Endothelial cell of umbilical vein (primary cell): ENCODE measurements at regions of chr2 and their contacts with region 1.

Region 1: DNA sequence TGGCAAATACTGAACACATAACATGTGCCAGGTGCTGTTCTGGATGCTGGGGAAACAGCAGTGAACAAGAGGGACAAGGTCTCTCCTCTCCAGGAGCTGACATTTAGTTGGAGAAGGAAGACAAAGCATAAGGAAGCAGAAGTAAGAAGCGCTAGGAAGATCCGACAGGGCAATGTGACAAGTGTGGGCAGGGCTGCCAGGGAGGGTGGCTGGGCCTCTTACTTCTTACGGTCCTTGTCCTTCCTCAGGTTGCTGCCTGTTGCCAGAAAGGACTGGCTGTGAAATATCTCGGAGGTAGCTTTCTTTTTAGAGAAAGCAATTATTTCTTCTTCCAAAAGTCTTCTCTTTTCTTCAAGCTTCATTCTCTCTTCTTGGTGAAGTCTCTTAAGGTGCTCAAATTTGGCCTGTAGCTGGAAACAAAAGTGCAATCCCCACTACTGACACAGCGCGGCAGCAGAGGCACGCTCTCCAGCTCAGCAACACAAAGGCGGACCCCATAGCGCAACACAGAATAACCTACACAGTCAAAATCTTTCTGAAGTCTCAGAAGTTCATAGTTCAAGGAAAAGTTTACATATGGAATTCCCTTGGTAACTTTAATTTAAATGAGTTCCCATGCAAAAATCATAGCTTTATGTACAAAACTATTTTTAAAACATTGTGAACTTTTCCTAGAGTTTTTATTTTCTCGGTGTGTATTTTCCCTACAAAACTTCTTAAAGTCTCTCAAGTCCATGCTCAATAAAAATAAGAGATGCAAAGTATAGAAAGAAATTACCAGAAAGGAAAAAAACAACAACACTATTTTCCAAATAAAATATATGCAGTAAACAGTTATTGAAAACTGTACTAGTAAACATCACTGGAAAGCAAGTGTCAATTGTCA is 67.7 kb downstream of the SEPTIN10 start:
- DNase-seq: peak; percentile 80
- H3K4me3 ChIP-seq: no peak overlapping the region
- H3K27ac ChIP-seq: no peak overlapping the region
- H3K4me1 ChIP-seq: peaks cover 3% of the 10 kb centered on the region
- H3K27me3 ChIP-seq: no peaks in the 10 kb centered on the region
- CTCF ChIP-seq: peak; percentile 86 to 88
- POLR2A ChIP-seq: no peak

Region 2: DNA sequence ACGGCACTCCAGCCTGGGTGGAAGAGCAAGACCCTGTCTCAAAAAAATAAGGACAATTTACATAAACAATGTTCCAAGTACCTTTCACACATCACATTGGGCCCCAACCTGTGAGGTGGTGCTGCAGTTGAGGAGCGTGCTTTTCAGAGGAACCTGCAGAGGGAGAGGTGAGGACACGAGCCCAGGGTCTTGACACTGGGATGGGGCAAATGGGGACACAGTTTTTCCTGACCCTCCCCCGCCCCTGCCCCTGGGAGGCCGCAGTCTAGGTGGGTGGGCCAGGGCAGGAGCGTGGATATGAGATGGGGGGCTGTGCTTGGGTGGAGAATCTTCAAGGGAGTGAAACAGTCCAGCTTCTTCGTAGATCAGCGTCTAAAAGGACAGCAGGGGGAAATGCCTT is 45.2 kb before region 1 on chr2:
- CTCF ChIA-PET with region 1: no interaction called
- POLR2A ChIA-PET with region 1: no interaction called
- dilution Hi-C with region 1: no loop called
- intact Hi-C with region 1: no loop called
- DNase-seq: no peak
- H3K4me3 ChIP-seq: no peak overlapping the region
- H3K27ac ChIP-seq: no peak overlapping the region
- H3K4me1 ChIP-seq: peaks cover 19% of the 10 kb centered on the region
- H3K27me3 ChIP-seq: no peaks in the 10 kb centered on the region
- CTCF ChIP-seq: no peak
- POLR2A ChIP-seq: no peak

Region 3: GRCh38 chr2:109516445-109517117 is 29.5 kb before region 1 on chr2:
- CTCF ChIA-PET with region 1: interaction called, 5 read pairs
- POLR2A ChIA-PET with region 1: no interaction called
- dilution Hi-C with region 1: no loop called
- intact Hi-C with region 1: loop called (anchors 1 kb)
- DNase-seq: peak; percentile 60
- H3K4me3 ChIP-seq: no peak overlapping the region
- H3K27ac ChIP-seq: no peak overlapping the region
- H3K4me1 ChIP-seq: no peaks in the 10 kb centered on the region
- H3K27me3 ChIP-seq: no peaks in the 10 kb centered on the region
- CTCF ChIP-seq: peak; percentile 84 to 95
- POLR2A ChIP-seq: no peak

Region 4: DNA sequence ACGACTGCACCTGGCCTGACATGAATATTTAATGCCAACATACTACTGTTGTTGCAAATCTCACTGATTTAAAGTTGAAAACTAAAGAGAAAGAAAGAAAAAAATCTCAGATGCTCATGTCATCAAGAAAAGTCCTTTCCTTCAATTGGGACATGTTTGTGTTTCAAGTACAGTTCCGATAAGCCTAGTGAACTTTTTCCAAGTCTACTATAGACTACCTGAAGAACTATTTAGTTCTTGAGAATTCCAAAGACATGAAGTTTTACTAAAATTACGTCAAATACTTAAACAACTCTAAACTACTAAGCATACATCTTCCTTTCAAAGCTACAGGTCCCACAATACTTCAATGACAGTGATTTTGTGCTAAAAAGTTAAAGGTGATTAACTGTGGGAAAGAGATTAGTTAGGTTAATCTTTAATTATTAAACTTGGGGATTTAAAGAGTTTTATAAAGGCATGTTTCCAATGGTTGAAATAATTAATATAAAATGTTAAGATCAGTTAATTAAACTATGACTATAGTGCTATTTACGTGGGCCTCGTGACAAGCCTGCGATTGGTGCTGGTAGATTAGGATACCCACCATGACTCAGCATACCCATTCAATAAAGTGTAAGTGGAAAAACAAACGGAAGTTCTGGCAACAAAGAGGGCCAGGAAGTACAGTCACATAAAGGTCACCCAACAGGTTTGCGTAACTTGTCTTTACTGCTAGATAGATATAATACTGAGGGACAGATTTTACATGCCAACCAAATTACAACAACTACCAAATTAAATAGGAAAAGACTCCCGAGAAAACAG is 12.2 kb after region 1 on chr2:
- CTCF ChIA-PET with region 1: interaction called, 18 read pairs
- POLR2A ChIA-PET with region 1: no interaction called
- dilution Hi-C with region 1: no loop called
- intact Hi-C with region 1: no loop called
- DNase-seq: peak; percentile 96
- H3K4me3 ChIP-seq: no peak overlapping the region
- H3K27ac ChIP-seq: peak overlapping the region; percentile 96
- H3K4me1 ChIP-seq: peaks cover 32% of the 10 kb centered on the region
- H3K27me3 ChIP-seq: no peaks in the 10 kb centered on the region
- CTCF ChIP-seq: no peak
- POLR2A ChIP-seq: peak; percentile 44

Region 5: DNA sequence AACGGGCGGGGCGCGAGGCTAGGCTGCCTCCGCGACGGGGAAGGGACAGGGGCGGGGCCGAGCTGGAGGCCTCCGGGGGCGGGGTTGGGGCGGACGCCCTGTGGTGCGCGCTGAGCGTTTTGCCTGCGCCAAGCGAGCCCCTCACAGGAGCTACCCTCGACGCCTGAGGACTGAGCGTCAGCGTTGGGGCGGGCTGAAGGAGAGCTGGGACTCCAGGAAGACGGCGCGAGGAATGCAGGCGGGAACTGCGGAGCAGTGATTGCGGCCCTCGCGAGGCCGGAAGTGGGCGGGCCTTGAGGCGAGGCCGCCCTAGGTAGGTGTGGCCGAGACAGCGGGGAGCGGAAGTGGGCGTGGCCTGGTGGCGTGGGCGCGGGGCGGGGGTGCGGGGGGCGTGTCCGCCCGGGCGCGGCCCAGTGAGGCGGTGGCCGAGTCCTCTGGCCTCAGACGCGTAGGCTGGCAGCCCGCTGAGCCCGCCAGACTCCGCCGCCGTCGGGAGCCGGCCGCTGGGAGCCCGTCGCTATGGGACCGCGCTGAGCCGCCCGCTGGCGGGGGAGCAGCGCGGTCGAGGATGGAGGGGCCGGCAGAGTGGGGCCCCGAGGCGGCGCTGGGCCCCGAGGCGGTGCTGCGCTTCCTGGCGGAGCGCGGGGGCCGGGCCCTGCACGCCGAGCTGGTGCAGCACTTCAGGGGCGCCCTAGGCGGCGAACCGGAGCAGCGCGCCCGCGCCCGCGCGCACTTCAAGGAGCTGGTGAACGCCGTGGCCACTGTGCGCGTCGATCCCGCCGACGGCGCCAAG is 68.0 kb after region 1 on chr2 and contains the starts of genes SEPTIN10 and SOWAHC:
- CTCF ChIA-PET with region 1: interaction called, 46 read pairs
- POLR2A ChIA-PET with region 1: interaction called, 4 read pairs
- dilution Hi-C with region 1: no loop called
- intact Hi-C with region 1: loop called (anchors 1 kb)
- DNase-seq: peak; percentile 99
- H3K4me3 ChIP-seq: peak within 1 kb of the TSS; percentile 81 to 100 (median 97)
- H3K27ac ChIP-seq: peak within 1 kb of the TSS; percentile 92
- H3K4me1 ChIP-seq: peaks cover 39% of the 10 kb centered on the region
- H3K27me3 ChIP-seq: no peaks in the 10 kb centered on the region
- CTCF ChIP-seq: no peak
- POLR2A ChIP-seq: peak; percentile 84
- total RNA-seq, gene SEPTIN10: 105 and 121 TPM in 2 replicates
- total RNA-seq, gene SOWAHC: 3.6 and 4.1 TPM in 2 replicates

Region 6: DNA sequence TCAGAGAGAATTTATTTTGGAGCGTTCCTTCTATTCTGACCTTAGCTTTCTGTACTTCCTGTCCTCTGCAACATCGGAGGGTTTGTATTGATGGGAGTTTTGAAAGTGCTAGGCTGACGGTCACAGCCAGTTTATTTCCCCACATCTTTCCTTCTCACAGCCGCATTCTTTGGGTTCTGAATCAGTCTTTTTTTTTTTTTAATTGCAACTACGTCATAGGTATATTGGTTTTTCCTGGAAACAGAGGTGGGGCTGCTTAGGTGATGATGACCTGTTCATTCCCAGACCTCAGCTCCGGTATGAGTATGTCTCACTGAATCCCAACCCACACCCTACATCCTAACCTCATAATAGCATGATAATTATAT is 156.5 kb after region 1 on chr2:
- CTCF ChIA-PET with region 1: interaction called, 10 read pairs
- POLR2A ChIA-PET with region 1: no interaction called
- dilution Hi-C with region 1: no loop called
- intact Hi-C with region 1: no loop called
- DNase-seq: no peak
- H3K4me3 ChIP-seq: no peak overlapping the region
- H3K27ac ChIP-seq: no peak overlapping the region
- H3K4me1 ChIP-seq: peaks cover 29% of the 10 kb centered on the region
- H3K27me3 ChIP-seq: peaks cover 2 to 11% of the 10 kb centered on the region in 2 experiments
- CTCF ChIP-seq: no peak
- POLR2A ChIP-seq: no peak

Region 7: GRCh38 chr2:109736177-109736827 is 190.2 kb after region 1 on chr2:
- CTCF ChIA-PET with region 1: interaction called, 191 read pairs
- POLR2A ChIA-PET with region 1: no interaction called
- dilution Hi-C with region 1: no loop called
- intact Hi-C with region 1: loop called (anchors 1 kb)
- DNase-seq: peak; percentile 73
- H3K4me3 ChIP-seq: no peak overlapping the region
- H3K27ac ChIP-seq: no peak overlapping the region
- H3K4me1 ChIP-seq: no peaks in the 10 kb centered on the region
- H3K27me3 ChIP-seq: peaks cover 0 to 4% of the 10 kb centered on the region in 2 experiments
- CTCF ChIP-seq: peak; percentile 53 to 58
- POLR2A ChIP-seq: no peak